ENCODE measurements at regions of chr7 and their contacts with region 1.

Region 1: DNA sequence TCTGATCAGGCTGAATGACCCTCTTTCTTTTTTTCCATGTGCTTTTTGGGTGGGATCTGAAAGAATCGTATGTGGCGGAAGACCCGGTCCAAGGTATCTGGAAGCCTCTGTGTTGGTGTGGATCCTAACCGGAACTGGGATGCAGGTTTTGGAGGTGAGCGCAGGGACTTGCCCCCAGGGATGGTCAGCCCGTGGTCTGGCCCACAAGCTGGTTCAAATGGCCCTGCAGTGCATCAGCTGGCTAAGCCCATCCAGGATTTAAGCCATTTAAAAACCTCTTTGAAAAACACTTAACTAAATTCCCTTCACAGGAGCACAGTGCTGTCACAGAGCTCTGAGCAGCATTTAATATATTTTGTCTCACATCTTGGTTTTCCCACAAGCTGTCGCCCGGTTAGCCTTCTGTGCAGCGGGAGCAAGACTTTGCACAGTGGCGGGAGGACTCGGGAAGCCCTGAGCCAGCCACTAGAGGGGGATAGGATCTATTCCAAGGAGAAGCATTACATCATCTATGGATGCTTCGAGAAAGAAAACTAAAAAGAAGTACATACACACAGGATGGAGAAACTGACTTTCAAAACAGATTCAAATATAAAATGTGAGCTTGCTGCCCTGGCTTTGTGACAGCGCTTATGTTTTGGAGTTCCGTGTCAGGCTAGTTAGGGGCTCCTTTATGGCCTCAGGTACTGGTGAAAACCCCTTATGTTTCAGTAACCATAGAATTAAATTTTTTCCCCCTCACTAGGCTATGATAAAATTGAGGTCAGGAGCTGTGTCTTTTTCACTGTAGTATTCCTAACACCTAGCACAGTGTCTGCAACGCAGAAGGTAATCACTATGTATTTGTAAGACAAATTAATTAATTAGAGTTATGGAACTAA is 11.3 kb downstream of the CPA2 start:
- DNase-seq: peak; percentile 41 to 66
- ATAC-seq: peak; percentile 69 to 80 (median 78)
- H3K4me3 ChIP-seq: no peak overlapping the region
- H3K27ac ChIP-seq: no peak overlapping the region
- H3K4me1 ChIP-seq: peaks cover under 1% of the 10 kb centered on the region
- H3K27me3 ChIP-seq: peaks cover 0 to 40% (median 4%) of the 10 kb centered on the region in 3 donors
- CTCF ChIP-seq: peak; percentile 53

Region 2: DNA sequence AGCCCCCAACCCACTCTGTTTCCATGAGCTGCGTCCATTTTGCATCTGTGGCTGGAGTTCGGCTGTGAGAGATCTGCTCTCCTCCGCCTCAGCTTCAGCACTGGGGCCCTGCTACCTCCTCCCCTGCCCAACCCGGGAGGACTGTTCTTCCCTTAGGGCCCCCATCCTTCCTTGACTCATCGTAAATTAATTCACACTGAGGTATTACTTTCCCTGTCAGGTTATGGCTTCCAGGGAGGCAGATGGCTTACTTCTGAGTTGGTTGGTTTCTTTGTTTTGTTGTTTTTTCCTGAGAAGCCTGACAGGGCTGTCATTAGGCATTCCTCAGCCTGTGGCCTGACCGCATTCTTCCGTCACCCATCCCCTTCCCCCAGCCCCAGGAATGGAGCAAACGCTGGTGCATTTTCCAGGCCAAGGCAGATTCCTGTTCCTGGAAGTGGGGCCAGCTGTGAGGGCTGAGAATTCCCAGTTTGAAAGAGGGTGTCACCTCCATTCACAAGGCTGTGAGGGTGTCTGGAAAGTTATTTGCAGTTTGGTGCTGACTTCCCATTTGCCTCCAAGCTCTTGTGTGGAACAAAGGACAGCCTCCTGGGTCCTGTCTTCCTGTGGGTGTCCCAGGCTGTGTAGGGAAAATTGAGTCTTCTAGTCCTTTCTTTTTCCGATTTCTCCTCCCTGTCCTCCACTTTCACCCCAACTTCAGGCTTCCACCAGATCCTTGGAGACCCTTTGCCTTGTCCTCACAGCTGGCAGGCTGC is 78.3 kb after region 1 on chr7:
- intact Hi-C with region 1: loop called in 1 of 2 experiments (anchors 10 kb)
- DNase-seq: peak; percentile 77 to 81
- ATAC-seq: peak; percentile 68 to 84 (median 77)
- H3K4me3 ChIP-seq: no peak overlapping the region
- H3K27ac ChIP-seq: peak overlapping the region; percentile 78
- H3K4me1 ChIP-seq: no peaks in the 10 kb centered on the region
- H3K27me3 ChIP-seq: peaks cover 0 to 15% (median 0%) of the 10 kb centered on the region in 3 donors
- CTCF ChIP-seq: no peak

Region 3: GRCh38 chr7:130486114-130486958 is 208.3 kb after region 1 on chr7:
- intact Hi-C with region 1: loop called in 1 of 2 experiments (anchors 10 kb)
- DNase-seq: peak; percentile 56 to 61
- ATAC-seq: peak in 2 of 4 donors; percentile 45 to 54
- H3K4me3 ChIP-seq: peak overlapping the region; percentile 57
- H3K27ac ChIP-seq: no peak overlapping the region
- H3K4me1 ChIP-seq: no peaks in the 10 kb centered on the region
- H3K27me3 ChIP-seq: peaks cover 0 to 26% (median 12%) of the 10 kb centered on the region in 3 donors
- CTCF ChIP-seq: peak; percentile 33

Measured in psoas muscle (tissue), 8 donors.